ENCODE measurements at regions of chr12 and their contacts with region 1.

Region 1: GRCh38 chr12:6927379-6928024 is at the start of gene ATN1:
- DNase-seq: no peak
- ATAC-seq: peak; percentile 43
- H3K4me3 ChIP-seq: peak within 1 kb of the TSS; percentile 95
- H3K27ac ChIP-seq: peak within 1 kb of the TSS; percentile 86
- H3K4me1 ChIP-seq: peaks cover 37% of the 10 kb centered on the region
- H3K27me3 ChIP-seq: no peaks in the 10 kb centered on the region
- CTCF ChIP-seq: no peak
- EP300 ChIP-seq: no peak
- POLR2A ChIP-seq: peak; percentile 79
- RAD21 ChIP-seq: no peak
- polyA plus RNA-seq, gene ATN1: 0.08 to 0.15 TPM

Region 2: DNA sequence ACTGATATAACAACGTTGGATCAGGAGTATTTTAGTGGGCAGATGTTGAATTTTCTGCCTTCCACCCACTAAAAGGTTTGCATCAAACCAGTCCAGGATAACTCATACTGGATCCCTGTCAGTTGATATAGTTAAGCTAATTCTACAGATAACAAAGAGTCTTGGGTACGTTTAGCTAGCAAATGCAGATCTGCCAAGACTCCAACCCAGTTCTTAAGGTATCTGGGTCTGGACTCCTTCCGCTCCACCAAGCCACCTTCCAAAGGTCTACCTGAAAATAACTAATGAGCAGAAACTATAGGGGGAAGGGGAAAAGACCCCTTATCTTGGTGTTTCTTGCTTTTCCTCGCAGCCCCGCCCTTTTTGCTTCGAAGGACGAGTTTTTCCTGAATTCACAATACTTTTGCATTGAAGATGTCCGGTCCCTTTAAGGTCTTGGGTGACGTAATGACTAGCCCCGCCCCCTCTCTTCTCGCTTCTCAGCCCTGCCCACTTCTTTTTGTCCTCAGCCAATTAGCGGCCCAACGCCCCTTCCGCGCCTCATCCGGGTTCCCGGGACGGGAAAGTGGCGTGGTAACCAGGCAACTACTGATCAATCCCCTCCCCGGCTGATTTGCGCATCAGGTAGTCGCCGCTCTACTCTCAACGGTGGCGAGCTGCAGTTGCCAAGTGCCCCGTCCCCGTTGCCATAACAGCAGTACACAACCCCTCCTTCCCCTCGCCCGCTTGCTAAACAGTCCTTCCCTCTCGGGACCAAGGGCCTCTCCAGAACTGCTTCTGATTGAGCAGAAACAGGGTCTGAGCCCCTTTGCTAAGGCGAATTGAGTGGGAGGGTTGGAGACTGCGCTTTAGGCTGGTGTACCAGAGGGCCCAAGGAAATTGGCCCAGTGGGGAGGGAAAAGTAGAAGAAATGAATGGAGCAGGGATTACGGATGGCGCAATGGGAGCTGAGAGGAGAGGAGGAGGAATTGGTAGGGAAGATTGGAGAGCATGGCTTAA is 22.9 kb before region 1 on chr12 and contains the start of gene LRRC23:
- CTCF ChIA-PET with region 1: interaction called, 11 read pairs
- POLR2A ChIA-PET with region 1: interaction called, 5 read pairs
- RAD21 ChIA-PET with region 1: interaction called, 3 read pairs
- SMC1A ChIA-PET with region 1: interaction called, 6 read pairs
- in situ Hi-C with region 1: no loop called
- intact Hi-C with region 1: no loop called
- DNase-seq: peak; percentile 87
- ATAC-seq: peak; percentile 99
- H3K4me3 ChIP-seq: peak within 1 kb of the TSS; percentile 93
- H3K27ac ChIP-seq: no peak within 1 kb of the TSS
- H3K4me1 ChIP-seq: peaks cover 7% of the 10 kb centered on the region; the same call in 1 of the 2 replicates
- H3K27me3 ChIP-seq: no peaks in the 10 kb centered on the region
- CTCF ChIP-seq: no peak
- EP300 ChIP-seq: peak in 1 of 2 experiments; percentile 38; a peak in 1 of 4 replicates
- POLR2A ChIP-seq: peak; percentile 73
- RAD21 ChIP-seq: no peak
- polyA plus RNA-seq, gene LRRC23: 1.4 to 2.5 TPM

Region 3: GRCh38 chr12:6914246-6914946 is 13.1 kb before region 1 on chr12 and contains the start of gene ENO2:
- CTCF ChIA-PET with region 1: interaction called, 20 read pairs
- POLR2A ChIA-PET with region 1: interaction called, 3 read pairs
- RAD21 ChIA-PET with region 1: no interaction called
- SMC1A ChIA-PET with region 1: interaction called, 3 read pairs
- in situ Hi-C with region 1: no loop called
- intact Hi-C with region 1: no loop called
- DNase-seq: no peak
- ATAC-seq: peak; percentile 92
- H3K4me3 ChIP-seq: peak within 1 kb of the TSS; percentile 100
- H3K27ac ChIP-seq: peak within 1 kb of the TSS; percentile 59
- H3K4me1 ChIP-seq: peaks cover 8% of the 10 kb centered on the region; the same call in 1 of the 2 replicates
- H3K27me3 ChIP-seq: no peaks in the 10 kb centered on the region
- CTCF ChIP-seq: no peak
- EP300 ChIP-seq: no peak
- POLR2A ChIP-seq: peak; percentile 59
- RAD21 ChIP-seq: no peak
- polyA plus RNA-seq, gene ENO2: 37.3 to 42.1 TPM

Region 4: DNA sequence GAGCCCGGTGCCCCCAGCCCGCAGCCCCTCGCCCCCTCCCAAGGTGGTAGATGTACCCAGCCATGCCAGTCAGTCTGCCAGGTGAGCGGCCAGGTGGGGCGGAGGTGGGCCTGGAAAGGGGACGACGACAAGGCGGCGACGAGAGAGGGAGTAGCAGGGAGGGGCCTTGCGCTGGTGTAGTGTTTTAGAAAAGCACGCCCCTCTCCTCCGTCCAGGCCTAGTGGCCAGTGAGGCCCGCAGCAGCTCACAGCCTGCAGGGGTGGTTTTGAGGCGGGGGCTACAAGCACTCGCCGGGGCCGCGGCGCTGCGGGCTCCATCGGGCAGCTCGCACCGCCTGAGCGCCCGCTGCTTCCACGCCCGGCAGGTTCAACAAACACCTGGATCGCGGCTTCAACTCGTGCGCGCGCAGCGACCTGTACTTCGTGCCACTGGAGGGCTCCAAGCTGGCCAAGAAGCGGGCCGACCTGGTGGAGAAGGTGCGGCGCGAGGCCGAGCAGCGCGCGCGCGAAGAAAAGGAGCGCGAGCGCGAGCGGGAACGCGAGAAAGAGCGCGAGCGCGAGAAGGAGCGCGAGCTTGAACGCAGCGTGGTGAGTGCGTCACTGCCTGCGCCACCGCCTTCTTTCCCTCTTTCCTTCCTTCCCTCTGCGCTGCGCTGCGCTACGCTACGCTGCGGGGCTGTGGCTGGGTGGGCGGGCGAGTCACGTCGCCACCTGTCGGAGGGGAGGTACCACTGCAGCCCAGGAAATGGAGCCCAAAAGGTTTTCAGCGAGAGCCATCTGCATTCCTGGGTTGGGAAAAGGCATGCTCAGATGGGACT is 10.2 kb after region 1 on chr12:
- CTCF ChIA-PET with region 1: interaction called, 111 read pairs
- POLR2A ChIA-PET with region 1: interaction called, 28 read pairs
- RAD21 ChIA-PET with region 1: interaction called, 45 read pairs
- SMC1A ChIA-PET with region 1: interaction called, 12 read pairs
- in situ Hi-C with region 1: no loop called
- intact Hi-C with region 1: loop called (anchors 2 kb)
- DNase-seq: peak; percentile 90
- ATAC-seq: peak; percentile 96
- H3K4me3 ChIP-seq: peak overlapping the region; percentile 86
- H3K27ac ChIP-seq: peak overlapping the region; percentile 92
- H3K4me1 ChIP-seq: peaks cover 11% of the 10 kb centered on the region; the same call in 1 of the 2 replicates
- H3K27me3 ChIP-seq: no peaks in the 10 kb centered on the region
- CTCF ChIP-seq: peak; percentile 96 to 99 (median 97)
- EP300 ChIP-seq: no peak
- POLR2A ChIP-seq: peak; percentile 87
- RAD21 ChIP-seq: peak; percentile 35

Region 5: DNA sequence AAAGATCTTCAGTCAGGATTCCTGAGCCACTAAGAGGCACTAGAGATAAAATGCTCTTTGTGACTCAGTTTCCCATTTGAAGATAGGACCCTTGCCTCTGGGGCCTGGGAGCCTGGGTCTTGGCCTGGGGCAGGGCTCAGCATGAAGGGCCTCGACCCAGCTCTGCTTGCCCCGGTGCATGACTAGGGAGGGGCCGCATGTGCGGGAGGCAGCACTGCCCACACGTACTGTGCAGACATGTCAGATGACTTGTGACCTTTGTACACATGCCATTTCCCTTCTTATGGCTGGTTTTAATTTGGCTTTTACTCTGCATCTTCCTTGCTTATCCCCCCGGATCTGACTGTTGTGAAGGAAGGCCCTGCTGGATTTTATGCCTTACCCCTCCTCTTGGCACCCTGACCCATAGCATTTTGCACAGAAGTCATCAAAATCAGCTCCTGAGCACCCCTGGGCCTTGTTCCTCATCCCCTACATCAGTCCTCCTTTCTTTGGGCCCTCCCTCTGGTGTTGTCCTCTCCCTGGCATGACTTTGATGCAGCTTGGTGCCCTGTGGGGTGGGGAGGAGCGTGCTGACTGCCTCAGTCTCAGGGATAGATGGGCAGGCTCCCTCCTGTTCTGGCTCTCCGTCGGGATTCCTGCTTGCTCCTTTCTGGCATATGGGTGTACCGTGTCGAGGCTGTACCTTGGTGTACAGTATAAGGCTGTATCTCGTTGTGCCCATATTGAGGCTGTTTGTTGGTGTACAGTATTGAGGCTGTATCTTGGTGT is 207.1 kb after region 1 on chr12:
- CTCF ChIA-PET with region 1: no interaction called
- POLR2A ChIA-PET with region 1: no interaction called
- RAD21 ChIA-PET with region 1: no interaction called
- SMC1A ChIA-PET with region 1: no interaction called
- in situ Hi-C with region 1: no loop called
- intact Hi-C with region 1: no loop called
- DNase-seq: no peak
- ATAC-seq: no peak
- H3K4me3 ChIP-seq: no peak overlapping the region
- H3K27ac ChIP-seq: no peak overlapping the region
- H3K4me1 ChIP-seq: peaks cover 12% of the 10 kb centered on the region
- H3K27me3 ChIP-seq: no peaks in the 10 kb centered on the region
- CTCF ChIP-seq: no peak
- EP300 ChIP-seq: no peak
- POLR2A ChIP-seq: peak; percentile 45; the same call in 1 of the 2 replicates
- RAD21 ChIP-seq: no peak

Region 6: DNA sequence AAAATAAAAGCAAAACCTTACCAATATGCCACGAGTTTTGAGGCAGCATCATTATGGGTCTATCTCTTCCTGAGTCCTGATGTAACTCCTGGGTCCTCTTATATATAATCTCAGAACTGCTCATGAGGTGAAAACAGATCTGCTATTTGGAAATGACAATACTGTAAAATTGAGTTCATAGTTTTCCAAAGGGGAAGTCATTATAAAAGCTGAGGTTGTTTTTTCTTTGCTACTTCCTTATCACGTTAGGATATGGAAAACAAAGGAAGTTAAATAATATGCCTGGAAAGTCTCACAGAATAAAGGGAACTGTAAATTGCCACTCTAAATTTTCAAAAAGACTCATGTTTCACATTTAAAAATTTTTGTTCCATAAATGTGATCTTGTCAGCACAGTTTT is 516.6 kb after region 1 on chr12 and contains the start of gene CD163L1:
- CTCF ChIA-PET with region 1: no interaction called
- POLR2A ChIA-PET with region 1: no interaction called
- RAD21 ChIA-PET with region 1: no interaction called
- SMC1A ChIA-PET with region 1: no interaction called
- in situ Hi-C with region 1: no loop called
- intact Hi-C with region 1: no loop called
- DNase-seq: no peak
- ATAC-seq: no peak
- H3K4me3 ChIP-seq: no peak within 1 kb of the TSS
- H3K27ac ChIP-seq: no peak within 1 kb of the TSS
- H3K4me1 ChIP-seq: no peaks in the 10 kb centered on the region
- H3K27me3 ChIP-seq: peaks cover 0 to 2% of the 10 kb centered on the region in 2 experiments; a peak in 1 of 4 replicates
- CTCF ChIP-seq: no peak
- EP300 ChIP-seq: no peak
- POLR2A ChIP-seq: no peak
- RAD21 ChIP-seq: no peak
- polyA plus RNA-seq, gene CD163L1: 2.2 to 2.4 TPM